CD8-positive, alpha-beta memory T cell (primary cell): ENCODE measurements at regions of chr17 and their contacts with region 1.

Region 1: GRCh38 chr17:82315703-82316358 is 1.6 kb downstream of the CD7 start:
- DNase-seq: peak in 4 of 5 donors; percentile 42 to 72 (median 59)
- H3K4me3 ChIP-seq: peak overlapping the region; percentile 91
- H3K4me3 Mint-ChIP-seq: peak overlapping the region in 5 of 7 donors; percentile 89 to 95 (median 94)
- H3K27ac ChIP-seq: peak overlapping the region; percentile 45
- H3K27ac Mint-ChIP-seq: peak overlapping the region in 7 of 8 donors; percentile 82 to 99 (median 96)
- H3K4me1 ChIP-seq: peaks cover 14% of the 10 kb centered on the region
- H3K4me1 Mint-ChIP-seq: peaks cover 8 to 30% (median 13%) of the 10 kb centered on the region in 3 donors
- H3K27me3 ChIP-seq: no peaks in the 10 kb centered on the region
- H3K27me3 Mint-ChIP-seq: peaks cover 0 to 2% of the 10 kb centered on the region in 2 donors

Region 2: DNA sequence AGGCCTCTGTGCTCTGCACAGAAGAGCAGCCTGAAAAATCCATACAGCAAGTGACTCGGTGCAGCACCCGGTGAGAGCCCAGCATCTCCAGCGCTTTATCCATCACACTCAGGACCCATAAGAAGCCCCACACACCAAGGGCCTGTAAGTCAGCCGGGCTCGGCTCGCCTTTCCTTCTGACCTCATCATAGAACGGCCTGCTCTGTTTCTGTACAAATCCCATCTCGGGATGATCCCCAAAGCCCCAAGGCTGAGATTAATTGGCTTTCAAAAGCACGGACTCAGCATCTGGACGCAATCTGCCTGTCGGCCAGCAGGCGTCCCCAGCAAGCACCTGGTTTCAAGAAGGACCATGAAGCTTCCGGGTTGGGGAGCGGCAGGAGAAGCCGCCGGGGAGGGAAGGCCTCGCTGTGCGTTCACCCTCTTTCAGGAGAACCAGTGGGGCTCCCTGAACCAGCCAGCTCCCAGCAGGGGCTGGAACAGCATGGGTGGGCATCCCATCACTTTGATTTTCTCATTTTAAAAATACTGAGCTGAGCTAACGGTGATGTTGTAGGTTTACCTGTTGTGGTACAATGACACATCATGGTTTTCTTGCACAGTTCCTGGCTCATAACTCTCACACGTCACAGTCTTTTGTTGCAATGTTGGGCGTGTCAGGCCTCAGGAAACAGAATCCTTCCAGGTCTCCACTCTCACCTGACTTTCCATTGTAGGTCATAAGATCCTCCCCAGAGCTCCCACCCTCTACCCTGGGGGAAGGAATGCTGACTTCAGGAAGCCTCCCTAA is 109.9 kb before region 1 on chr17:
- CTCF ChIA-PET with region 1: interaction called, 14 read pairs
- POLR2A ChIA-PET with region 1: no interaction called
- DNase-seq: peak; percentile 67 to 86 (median 78)
- H3K4me3 ChIP-seq: peak overlapping the region; percentile 30
- H3K4me3 Mint-ChIP-seq: peak overlapping the region; percentile 26 to 79 (median 65)
- H3K27ac ChIP-seq: peak overlapping the region; percentile 69
- H3K27ac Mint-ChIP-seq: peak overlapping the region; percentile 93 to 98 (median 96)
- H3K4me1 ChIP-seq: peaks cover 26% of the 10 kb centered on the region
- H3K4me1 Mint-ChIP-seq: peaks cover 36 to 56% (median 38%) of the 10 kb centered on the region in 3 donors
- H3K27me3 ChIP-seq: no peaks in the 10 kb centered on the region
- H3K27me3 Mint-ChIP-seq: no peaks in the 10 kb centered on the region

Region 3: DNA sequence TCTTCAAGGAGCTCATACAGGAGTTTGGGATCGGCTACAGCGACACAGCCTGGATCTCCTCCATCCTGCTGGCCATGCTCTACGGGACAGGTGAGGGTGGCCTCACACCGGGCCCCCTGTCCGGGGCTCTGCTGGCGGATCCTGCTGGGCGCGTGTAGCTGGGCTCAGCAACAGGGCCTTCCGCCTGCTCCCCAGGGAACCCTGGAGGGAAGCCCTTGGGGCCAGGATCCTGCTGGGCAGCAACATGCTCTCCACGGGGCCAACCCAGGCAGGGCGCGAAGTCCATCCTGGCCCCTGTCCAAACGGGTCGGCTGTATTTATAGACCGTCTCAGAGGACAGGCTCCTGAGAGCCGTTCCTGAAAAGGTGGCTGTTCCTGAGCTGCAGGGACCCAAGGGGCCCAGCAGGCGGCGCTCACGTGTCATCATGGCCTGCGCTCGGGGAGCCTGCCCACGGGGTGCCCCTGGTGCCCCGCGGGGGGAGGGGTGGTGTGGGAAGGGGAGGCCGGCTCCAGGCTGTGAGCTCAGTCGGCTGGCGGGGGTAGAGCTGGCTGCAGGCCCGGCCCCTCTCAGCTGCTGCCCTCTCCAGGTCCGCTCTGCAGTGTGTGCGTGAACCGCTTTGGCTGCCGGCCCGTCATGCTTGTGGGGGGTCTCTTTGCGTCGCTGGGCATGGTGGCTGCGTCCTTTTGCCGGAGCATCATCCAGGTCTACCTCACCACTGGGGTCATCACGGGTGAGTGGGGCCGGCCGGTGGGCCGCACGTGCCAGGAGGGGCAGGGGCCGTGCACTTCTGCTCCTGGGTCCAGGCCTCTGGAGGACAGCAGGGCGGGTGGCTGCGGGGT is 79.5 kb before region 1 on chr17:
- CTCF ChIA-PET with region 1: interaction called, 24 read pairs
- POLR2A ChIA-PET with region 1: interaction called, 3 read pairs
- DNase-seq: peak; percentile 57 to 78 (median 67)
- H3K4me3 ChIP-seq: no peak overlapping the region
- H3K4me3 Mint-ChIP-seq: peak overlapping the region in 1 of 7 donors; percentile 48
- H3K27ac ChIP-seq: peak overlapping the region; percentile 75
- H3K27ac Mint-ChIP-seq: peak overlapping the region in 6 of 8 donors; percentile 36 to 89 (median 73)
- H3K4me1 ChIP-seq: peaks cover 49% of the 10 kb centered on the region
- H3K4me1 Mint-ChIP-seq: peaks cover 21 to 59% (median 24%) of the 10 kb centered on the region in 3 donors
- H3K27me3 ChIP-seq: no peaks in the 10 kb centered on the region
- H3K27me3 Mint-ChIP-seq: no peaks in the 10 kb centered on the region

Region 4: GRCh38 chr17:82292251-82293154 is 23.3 kb before region 1 on chr17:
- CTCF ChIA-PET with region 1: interaction called, 127 read pairs
- POLR2A ChIA-PET with region 1: interaction called, 37 read pairs
- DNase-seq: peak; percentile 84 to 96 (median 92)
- H3K4me3 ChIP-seq: peak overlapping the region; percentile 82
- H3K4me3 Mint-ChIP-seq: peak overlapping the region; percentile 87 to 93 (median 90)
- H3K27ac ChIP-seq: peak overlapping the region; percentile 80
- H3K27ac Mint-ChIP-seq: peak overlapping the region; percentile 90 to 97 (median 94)
- H3K4me1 ChIP-seq: peaks cover 28% of the 10 kb centered on the region
- H3K4me1 Mint-ChIP-seq: peaks cover 26 to 48% (median 31%) of the 10 kb centered on the region in 3 donors
- H3K27me3 ChIP-seq: no peaks in the 10 kb centered on the region
- H3K27me3 Mint-ChIP-seq: peaks cover 0 to 5% of the 10 kb centered on the region in 2 donors

Region 5: GRCh38 chr17:82297714-82298537 is 17.9 kb before region 1 on chr17:
- CTCF ChIA-PET with region 1: interaction called, 127 read pairs
- POLR2A ChIA-PET with region 1: interaction called, 37 read pairs
- DNase-seq: peak; percentile 86 to 98 (median 97)
- H3K4me3 ChIP-seq: peak overlapping the region; percentile 79
- H3K4me3 Mint-ChIP-seq: peak overlapping the region; percentile 91 to 98 (median 96)
- H3K27ac ChIP-seq: peak overlapping the region; percentile 95
- H3K27ac Mint-ChIP-seq: peak overlapping the region; percentile 100
- H3K4me1 ChIP-seq: peaks cover 66% of the 10 kb centered on the region
- H3K4me1 Mint-ChIP-seq: peaks cover 60 to 88% (median 79%) of the 10 kb centered on the region in 3 donors
- H3K27me3 ChIP-seq: no peaks in the 10 kb centered on the region
- H3K27me3 Mint-ChIP-seq: peaks cover 0 to 9% of the 10 kb centered on the region in 2 donors

Region 6: DNA sequence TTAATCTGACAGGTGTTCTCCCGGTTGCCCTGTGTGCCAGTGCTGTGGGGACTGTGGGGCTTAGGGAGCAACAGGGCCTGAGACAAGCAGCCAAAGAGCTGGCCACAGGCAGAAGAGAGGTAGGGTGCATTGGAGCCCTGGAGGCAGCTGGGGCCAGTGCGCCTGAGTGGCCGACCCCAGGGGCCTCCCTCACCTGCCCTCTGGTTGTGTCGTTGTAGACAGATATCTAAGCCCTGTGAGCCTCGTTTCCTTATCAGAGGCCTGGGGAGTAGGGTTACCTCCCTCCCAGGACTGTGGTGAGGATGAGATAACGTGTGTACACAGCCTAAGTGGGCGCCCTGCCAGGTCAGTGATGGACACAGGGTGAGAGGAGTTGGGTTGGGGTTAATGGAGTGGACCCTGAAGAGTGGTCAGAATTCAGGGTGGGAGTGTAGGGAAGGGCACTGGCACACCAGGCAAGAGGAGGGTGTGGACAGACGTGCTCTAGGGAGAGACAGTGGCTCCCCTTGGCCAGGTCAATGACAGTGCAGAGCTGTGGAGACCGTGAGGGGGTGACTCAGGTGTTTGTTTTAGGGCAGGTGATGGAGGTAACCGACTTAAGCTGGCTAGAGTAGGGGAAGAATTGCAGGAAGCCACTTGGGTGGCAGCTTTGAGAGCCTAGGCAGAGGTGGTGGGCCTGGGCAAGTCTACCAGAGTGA is 146.1 kb after region 1 on chr17:
- CTCF ChIA-PET with region 1: no interaction called
- POLR2A ChIA-PET with region 1: no interaction called
- DNase-seq: no peak
- H3K4me3 ChIP-seq: no peak overlapping the region
- H3K4me3 Mint-ChIP-seq: peak overlapping the region in 1 of 7 donors; percentile 64
- H3K27ac ChIP-seq: peak overlapping the region; percentile 60
- H3K27ac Mint-ChIP-seq: peak overlapping the region in 2 of 8 donors; percentile 72 to 82
- H3K4me1 ChIP-seq: peaks cover 16% of the 10 kb centered on the region
- H3K4me1 Mint-ChIP-seq: peaks cover 31 to 39% (median 39%) of the 10 kb centered on the region in 3 donors
- H3K27me3 ChIP-seq: no peaks in the 10 kb centered on the region
- H3K27me3 Mint-ChIP-seq: peaks cover 0 to 1% of the 10 kb centered on the region in 2 donors